Sigmoid colon (tissue), 7 donors: ENCODE measurements at regions of chr22 and their contacts with region 1.

Region 1: DNA sequence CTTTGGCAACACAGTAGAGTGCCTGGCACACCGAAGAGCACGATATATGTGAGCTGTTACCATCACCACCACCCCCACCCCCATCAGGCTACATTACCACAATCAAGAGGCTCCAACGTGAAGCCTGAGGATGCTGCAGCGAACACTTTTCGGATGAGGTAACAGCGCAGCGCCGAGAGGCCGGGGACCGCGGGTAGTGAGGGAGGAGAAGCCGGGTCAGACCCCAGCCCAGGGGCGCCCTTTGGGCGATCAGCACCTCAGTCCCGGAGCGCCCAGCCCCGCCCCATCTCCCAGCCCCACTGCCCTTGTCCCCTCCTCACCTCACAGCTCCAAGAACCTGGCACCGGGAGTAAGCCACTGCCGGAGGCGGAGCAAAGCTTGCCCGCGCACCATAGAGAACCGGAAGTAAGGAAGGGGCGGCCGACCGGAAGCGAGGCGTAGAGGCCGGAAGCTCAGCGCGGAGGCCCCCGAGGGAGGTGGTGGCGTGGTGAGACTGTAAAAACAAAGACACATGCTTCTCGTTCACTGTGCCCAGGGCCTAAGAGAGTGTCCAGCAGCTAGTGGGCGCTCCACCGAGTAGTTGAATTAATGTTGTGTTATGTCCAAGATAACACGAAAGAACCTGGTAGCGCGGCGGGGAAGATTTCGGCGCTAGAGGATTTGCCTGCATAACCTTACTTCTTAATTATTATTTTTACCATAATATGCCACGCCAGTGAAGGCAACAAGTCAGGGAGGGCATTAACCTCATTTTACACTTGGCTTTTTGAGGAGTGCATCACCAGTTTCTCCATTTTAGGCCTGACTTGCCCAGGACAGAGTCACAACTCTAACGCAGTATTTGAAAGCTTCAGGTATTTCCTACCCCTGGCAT is at the start of gene THOC5:
- DNase-seq: peak; percentile 97
- H3K4me3 ChIP-seq: peak within 1 kb of the TSS; percentile 70 to 93 (median 78)
- H3K27ac ChIP-seq: peak within 1 kb of the TSS; percentile 82 to 89 (median 86)
- H3K4me1 ChIP-seq: peaks cover 0 to 14% (median 11%) of the 10 kb centered on the region in 4 donors
- H3K27me3 ChIP-seq: no peaks in the 10 kb centered on the region
- CTCF ChIP-seq: peak in 3 of 4 experiments; percentile 46 to 60 (median 59)
- EP300 ChIP-seq: no peak
- POLR2A ChIP-seq: peak in 1 of 2 donors; percentile 15
- total RNA-seq, gene THOC5: 50.1 to 72.2 (median 66.5) TPM

Region 2: DNA sequence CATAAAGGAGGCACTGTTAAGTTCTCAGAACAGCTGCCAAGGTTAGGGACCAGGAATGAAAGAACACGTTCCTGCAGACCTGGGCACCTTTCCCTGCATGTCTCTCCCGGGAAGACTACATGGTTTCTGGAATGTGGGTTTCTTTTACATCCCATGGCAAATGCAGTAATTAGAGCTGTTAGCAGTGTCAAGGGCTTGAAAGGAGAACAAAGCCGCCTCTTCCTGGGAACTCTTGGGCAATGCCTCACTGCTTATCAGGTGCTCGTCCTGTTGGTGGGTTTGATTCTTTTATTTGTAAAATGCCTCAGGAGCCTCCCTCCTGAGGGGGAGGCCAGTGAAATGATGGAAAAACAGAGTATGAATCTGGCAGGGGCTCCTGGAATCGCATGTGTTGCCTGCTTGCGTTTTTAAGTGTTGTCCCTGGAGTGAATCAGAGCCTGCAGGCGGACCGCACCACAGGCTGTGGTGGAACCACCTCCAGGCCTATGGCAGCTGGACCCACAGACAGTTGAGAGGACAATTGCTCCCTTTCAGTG is 491.2 kb before region 1 on chr22:
- intact Hi-C with region 1: no loop called
- DNase-seq: no peak
- H3K4me3 ChIP-seq: no peak overlapping the region
- H3K27ac ChIP-seq: no peak overlapping the region
- H3K4me1 ChIP-seq: no peaks in the 10 kb centered on the region
- H3K27me3 ChIP-seq: no peaks in the 10 kb centered on the region
- CTCF ChIP-seq: no peak
- EP300 ChIP-seq: no peak
- POLR2A ChIP-seq: no peak

Region 3: GRCh38 chr22:29603358-29604075 is 49.9 kb after region 1 on chr22 and contains the start of gene NF2:
- intact Hi-C with region 1: loop called (anchors 1 kb)
- DNase-seq: peak; percentile 99
- H3K4me3 ChIP-seq: peak within 1 kb of the TSS; percentile 87 to 100 (median 94)
- H3K27ac ChIP-seq: peak within 1 kb of the TSS; percentile 94 to 99 (median 97)
- H3K4me1 ChIP-seq: peaks cover 0 to 29% (median 24%) of the 10 kb centered on the region in 4 donors
- H3K27me3 ChIP-seq: no peaks in the 10 kb centered on the region
- CTCF ChIP-seq: no peak
- EP300 ChIP-seq: no peak
- POLR2A ChIP-seq: no peak
- total RNA-seq, gene NF2: 16.6 to 34.3 (median 23.8) TPM